GM12878 (cell line): ENCODE measurements at regions of chr6 and their contacts with region 1.

Region 1: DNA sequence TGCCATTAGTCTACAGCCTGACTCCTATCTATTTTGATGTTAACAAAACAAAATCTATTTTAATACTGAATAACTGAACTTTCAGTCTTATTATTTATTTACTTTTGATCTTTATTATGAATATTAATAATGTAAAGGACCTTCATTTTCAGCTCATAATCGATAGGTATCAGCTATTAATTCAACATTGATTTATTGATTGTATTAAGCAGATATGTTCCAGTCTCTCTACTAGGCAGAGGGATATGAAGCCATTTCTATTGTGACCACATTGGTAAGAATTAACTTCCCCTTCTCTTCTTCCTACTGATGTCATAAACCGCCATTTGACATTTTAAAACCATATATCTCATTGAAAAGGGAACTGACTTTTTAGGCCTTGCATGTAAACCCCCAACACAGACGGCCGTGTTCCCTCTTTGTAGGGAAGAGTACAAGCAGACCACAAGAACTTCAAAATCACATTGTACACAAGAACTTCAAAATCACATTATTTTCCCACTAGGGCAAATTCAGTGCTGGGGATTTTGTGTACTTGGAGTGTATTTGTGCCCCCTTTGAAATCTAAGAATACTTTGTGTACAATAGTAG is 69.5 kb upstream of the FABP7 start:
- DNase-seq: peak; percentile 11
- ATAC-seq: peak; percentile 82
- H3K4me3 ChIP-seq: no peak overlapping the region
- H3K27ac ChIP-seq: no peak overlapping the region
- H3K4me1 ChIP-seq: no peaks in the 10 kb centered on the region
- H3K27me3 ChIP-seq: no peaks in the 10 kb centered on the region; a peak in 1 of 4 replicates
- CTCF ChIP-seq: no peak
- EP300 ChIP-seq: peak; percentile 69 to 80; a peak in 3 of 4 replicates
- POLR2A ChIP-seq: no peak
- RAD21 ChIP-seq: no peak

Region 2: DNA sequence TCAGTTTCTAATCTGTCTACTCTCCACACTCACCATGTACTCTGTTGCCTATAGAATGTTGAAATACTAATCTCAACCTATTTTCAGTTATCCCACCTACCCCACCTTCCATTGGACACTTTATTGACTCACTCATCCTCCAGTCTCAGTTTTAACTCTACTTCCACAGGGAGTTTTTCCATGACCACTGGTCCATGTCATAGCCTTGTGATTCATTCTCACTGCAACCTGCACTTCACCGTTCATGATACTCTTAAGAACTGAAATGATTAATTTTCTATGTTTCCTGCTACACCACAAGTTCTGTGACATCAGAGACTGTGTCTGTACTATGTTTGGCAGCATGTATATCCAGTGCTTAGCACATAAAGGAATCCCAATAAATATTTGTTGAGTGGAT is 433.4 kb before region 1 on chr6:
- CTCF ChIA-PET with region 1: no interaction called
- POLR2A ChIA-PET with region 1: no interaction called
- RAD21 ChIA-PET with region 1: no interaction called
- SMC1A ChIA-PET with region 1: no interaction called
- in situ Hi-C with region 1: no loop called
- intact Hi-C with region 1: no loop called
- DNase-seq: no peak
- ATAC-seq: no peak
- H3K4me3 ChIP-seq: no peak overlapping the region
- H3K27ac ChIP-seq: no peak overlapping the region
- H3K4me1 ChIP-seq: no peaks in the 10 kb centered on the region
- H3K27me3 ChIP-seq: no peaks in the 10 kb centered on the region
- CTCF ChIP-seq: no peak
- EP300 ChIP-seq: no peak
- POLR2A ChIP-seq: no peak
- RAD21 ChIP-seq: no peak

Region 3: DNA sequence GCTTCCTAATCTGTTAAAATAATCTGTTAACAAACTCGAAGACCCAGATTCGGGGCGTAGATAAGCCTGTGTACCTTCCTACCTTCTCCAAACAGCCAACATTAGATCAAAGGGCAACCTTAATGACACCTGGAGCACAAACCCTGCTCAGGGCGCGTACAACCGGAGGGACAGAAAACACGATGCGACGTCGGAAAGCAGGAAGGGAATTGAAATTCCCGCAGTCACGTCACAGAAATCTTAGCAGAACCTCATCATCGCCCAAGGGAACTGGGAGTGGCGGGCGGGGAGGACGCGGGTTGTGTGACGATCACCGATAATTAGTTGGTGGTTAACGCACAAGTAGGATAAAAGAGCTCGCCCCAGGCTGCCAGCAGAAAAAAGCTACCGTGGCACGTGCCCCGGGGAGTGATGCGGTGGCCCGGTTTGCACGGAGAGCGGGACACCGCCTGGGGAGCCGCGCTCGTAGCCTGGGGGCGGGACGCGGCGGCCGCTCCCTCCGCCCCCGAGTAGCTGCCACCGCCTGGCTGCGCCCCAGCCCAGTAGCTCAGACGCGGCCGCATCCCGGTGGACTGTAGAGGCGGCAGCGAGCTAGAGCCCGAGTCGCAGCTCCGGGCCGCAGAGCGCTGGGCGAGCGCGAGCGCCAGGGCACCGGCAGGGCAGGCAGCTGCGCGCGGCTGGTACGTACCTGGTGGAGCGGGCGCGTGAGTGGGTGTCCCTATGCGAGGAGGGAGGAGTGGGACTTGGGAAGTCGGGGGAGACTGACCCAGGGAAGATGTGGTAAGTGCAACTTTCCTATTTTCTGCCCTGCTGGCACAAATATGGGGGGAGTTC is 99.9 kb before region 1 on chr6 and contains the start of gene PKIB:
- CTCF ChIA-PET with region 1: interaction called, 8 read pairs
- POLR2A ChIA-PET with region 1: interaction called, 3 read pairs
- RAD21 ChIA-PET with region 1: interaction called, 21 read pairs
- SMC1A ChIA-PET with region 1: interaction called, 14 read pairs
- in situ Hi-C with region 1: no loop called
- intact Hi-C with region 1: no loop called
- DNase-seq: no peak
- ATAC-seq: peak; percentile 98
- H3K4me3 ChIP-seq: peak within 1 kb of the TSS; percentile 50
- H3K27ac ChIP-seq: no peak within 1 kb of the TSS
- H3K4me1 ChIP-seq: peaks cover 5% of the 10 kb centered on the region
- H3K27me3 ChIP-seq: peaks cover 8 to 17% of the 10 kb centered on the region in 2 experiments
- CTCF ChIP-seq: peak in 2 of 3 experiments; percentile 19 to 24; a peak in 2 of 6 replicates
- EP300 ChIP-seq: no peak
- POLR2A ChIP-seq: no peak
- RAD21 ChIP-seq: no peak
- polyA plus RNA-seq, gene PKIB: 0.97 to 1.8 TPM

Region 4: GRCh38 chr6:122663981-122664380 is 46.0 kb before region 1 on chr6:
- CTCF ChIA-PET with region 1: interaction called, 4 read pairs
- POLR2A ChIA-PET with region 1: interaction called, 4 read pairs
- RAD21 ChIA-PET with region 1: interaction called, 5 read pairs
- SMC1A ChIA-PET with region 1: interaction called, 23 read pairs
- in situ Hi-C with region 1: no loop called
- intact Hi-C with region 1: no loop called
- DNase-seq: no peak
- ATAC-seq: no peak
- H3K4me3 ChIP-seq: no peak overlapping the region
- H3K27ac ChIP-seq: no peak overlapping the region
- H3K4me1 ChIP-seq: no peaks in the 10 kb centered on the region
- H3K27me3 ChIP-seq: no peaks in the 10 kb centered on the region
- CTCF ChIP-seq: no peak
- EP300 ChIP-seq: no peak
- POLR2A ChIP-seq: no peak
- RAD21 ChIP-seq: no peak

Region 5: GRCh38 chr6:122751326-122751725 is 41.3 kb after region 1 on chr6:
- CTCF ChIA-PET with region 1: interaction called, 4 read pairs
- POLR2A ChIA-PET with region 1: interaction called, 3 read pairs
- RAD21 ChIA-PET with region 1: no interaction called
- SMC1A ChIA-PET with region 1: interaction called, 10 read pairs
- in situ Hi-C with region 1: no loop called
- intact Hi-C with region 1: no loop called
- DNase-seq: no peak
- ATAC-seq: peak; percentile 75
- H3K4me3 ChIP-seq: no peak overlapping the region
- H3K27ac ChIP-seq: no peak overlapping the region
- H3K4me1 ChIP-seq: 0 out of 2 replicates have a peak, but pooled peaks cover 3% of the 10 kb centered on the region
- H3K27me3 ChIP-seq: no peaks in the 10 kb centered on the region
- CTCF ChIP-seq: no peak
- EP300 ChIP-seq: no peak
- POLR2A ChIP-seq: no peak
- RAD21 ChIP-seq: no peak